Left cardiac atrium (tissue), 4 donors: ENCODE measurements at regions of chr2 and their contacts with region 1.

Region 1: GRCh38 chr2:179569831-179570233 is 291.6 kb downstream of the ZNF385B start:
- DNase-seq: no peak
- ATAC-seq: peak; percentile 62 to 93

Region 2: GRCh38 chr2:178962805-178963433 is 606.9 kb before region 1 on chr2:
- intact Hi-C with region 1: no loop called
- DNase-seq: no peak
- ATAC-seq: peak; percentile 80 to 91

Region 3: GRCh38 chr2:179751163-179751809 is 181.5 kb after region 1 on chr2:
- intact Hi-C with region 1: loop called in 1 of 2 experiments (anchors 10 kb)
- DNase-seq: no peak
- ATAC-seq: no peak